ENCODE measurements at regions of chr11 and their contacts with region 1.

Region 1: GRCh38 chr11:57324886-57325734 is at the start of gene TNKS1BP1:
- ATAC-seq: peak; percentile 69 to 90 (median 86)
- H3K4me3 ChIP-seq: peak within 1 kb of the TSS; percentile 57 to 97 (median 86)
- H3K27ac ChIP-seq: peak within 1 kb of the TSS; percentile 91 to 97
- H3K4me1 ChIP-seq: peaks cover 29 to 33% of the 10 kb centered on the region in 2 donors
- total RNA-seq, gene TNKS1BP1: 28.4 to 104 (median 55.4) TPM

Region 2: GRCh38 chr11:57150454-57150917 is 174.6 kb before region 1 on chr11:
- in situ Hi-C with region 1: loop called in 1 of 9 experiments (anchors 25 kb)
- ATAC-seq: peak in 3 of 8 experiments; percentile 35 to 57 (median 47)
- H3K4me3 ChIP-seq: no peak overlapping the region
- H3K27ac ChIP-seq: no peak overlapping the region
- H3K4me1 ChIP-seq: peaks cover 5 to 18% of the 10 kb centered on the region in 2 donors

Region 3: DNA sequence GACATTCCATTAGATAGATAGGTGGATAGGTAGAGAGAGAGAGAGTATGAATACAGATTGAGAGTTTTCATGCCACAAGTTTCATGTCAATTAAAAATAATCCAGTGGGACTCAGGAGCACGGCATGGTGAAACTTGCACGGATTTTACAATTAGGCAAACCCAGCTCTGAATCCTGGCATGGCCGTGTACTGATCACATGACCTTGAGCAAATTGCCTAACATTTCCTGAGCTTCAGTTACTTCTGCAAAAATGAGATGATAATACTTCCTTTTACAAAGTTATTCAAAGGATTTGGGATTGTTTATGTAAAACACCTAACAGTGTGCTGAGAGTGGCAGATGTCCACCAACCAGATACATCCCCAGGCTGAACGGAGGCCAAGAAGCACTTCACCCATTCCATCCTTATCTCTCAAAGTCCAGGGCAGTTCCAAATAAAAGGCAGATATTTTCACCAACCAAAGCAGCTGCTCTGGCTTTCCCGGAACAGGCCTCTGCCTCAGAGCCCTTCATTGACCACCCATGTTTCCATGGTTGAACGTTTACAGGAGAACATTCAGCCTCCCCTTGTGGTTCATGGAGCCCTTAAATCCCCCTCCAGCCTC is 106.0 kb before region 1 on chr11:
- in situ Hi-C with region 1: no loop called
- ATAC-seq: no peak
- H3K4me3 ChIP-seq: no peak overlapping the region
- H3K27ac ChIP-seq: no peak overlapping the region
- H3K4me1 ChIP-seq: peaks cover 23 to 26% of the 10 kb centered on the region in 2 donors

Region 4: GRCh38 chr11:57249384-57250319 is 75.5 kb before region 1 on chr11:
- in situ Hi-C with region 1: no loop called
- ATAC-seq: peak; percentile 47 to 75 (median 71)
- H3K4me3 ChIP-seq: no peak overlapping the region
- H3K27ac ChIP-seq: no peak overlapping the region
- H3K4me1 ChIP-seq: peaks cover 0 to 5% of the 10 kb centered on the region in 2 donors

Region 5: GRCh38 chr11:57456960-57457642 is 132.0 kb after region 1 on chr11:
- in situ Hi-C with region 1: loop called in 1 of 9 experiments (anchors 25 kb)
- ATAC-seq: peak; percentile 40 to 71 (median 61)
- H3K4me3 ChIP-seq: no peak overlapping the region
- H3K27ac ChIP-seq: no peak overlapping the region
- H3K4me1 ChIP-seq: peaks cover 12 to 14% of the 10 kb centered on the region in 2 donors

Region 6: GRCh38 chr11:57515332-57516060 is 190.4 kb after region 1 on chr11 and contains the start of gene SLC43A1:
- in situ Hi-C with region 1: loop called in 1 of 9 experiments (anchors 25 kb)
- ATAC-seq: peak; percentile 58 to 70 (median 61)
- H3K4me3 ChIP-seq: peak within 1 kb of the TSS; percentile 39 to 57 (median 48)
- H3K27ac ChIP-seq: no peak within 1 kb of the TSS
- H3K4me1 ChIP-seq: peaks cover 5 to 10% of the 10 kb centered on the region in 2 donors
- total RNA-seq, gene SLC43A1: 0.32 to 13.7 (median 2.1) TPM

Measured in motor neuron (in vitro differentiated cells).